ENCODE measurements at regions of chr7 and their contacts with region 1.

Region 1: DNA sequence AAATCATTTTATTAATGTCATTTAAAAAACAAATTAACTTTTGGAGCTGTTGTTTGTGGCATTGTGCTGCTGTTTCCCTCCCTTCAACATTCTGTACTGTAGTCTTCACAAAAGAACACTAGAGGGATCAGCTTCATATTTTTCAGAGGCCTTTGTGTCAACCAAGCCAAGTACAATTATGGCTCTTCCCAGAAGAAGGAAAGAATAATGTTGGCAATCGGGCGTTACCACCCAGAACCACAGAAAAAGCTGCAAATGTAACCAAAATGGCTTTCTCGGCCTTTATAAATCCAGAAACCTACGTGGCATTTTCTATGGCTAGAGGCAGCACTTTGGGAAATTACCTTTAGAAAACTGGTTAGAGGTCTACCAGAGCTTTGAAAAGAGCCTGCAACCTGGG is 98.8 kb upstream of the COL1A2 start:
- DNase-seq: no peak
- H3K4me3 ChIP-seq: peak overlapping the region; percentile 32
- CTCF ChIP-seq: peak; percentile 53

Region 2: GRCh38 chr7:94368371-94368791 is 72.5 kb after region 1 on chr7:
- CTCF ChIA-PET with region 1: interaction called, 18 read pairs
- POLR2A ChIA-PET with region 1: interaction called, 54 read pairs
- DNase-seq: peak; percentile 58
- H3K4me3 ChIP-seq: peak overlapping the region; percentile 41
- CTCF ChIP-seq: no peak

Region 3: DNA sequence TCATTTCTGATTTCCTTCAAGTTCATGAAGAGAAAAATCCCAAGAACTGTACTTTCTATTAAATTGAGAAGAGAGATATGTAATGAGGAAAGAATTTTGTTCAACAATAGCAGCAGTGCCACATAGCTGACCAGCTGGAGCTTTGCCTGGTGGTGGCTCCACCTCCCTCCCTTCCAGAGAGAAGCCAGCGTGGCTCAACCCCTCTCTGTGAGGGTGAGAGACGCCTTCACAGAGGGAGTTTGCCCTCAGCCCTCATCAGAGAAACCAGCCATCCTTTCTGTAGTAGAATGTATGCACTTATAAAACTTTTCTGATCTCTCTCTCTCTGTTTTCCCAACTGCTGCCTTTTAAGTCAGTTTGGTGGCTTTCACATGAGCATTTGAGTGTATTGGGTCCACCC is 78.4 kb after region 1 on chr7:
- CTCF ChIA-PET with region 1: interaction called, 34 read pairs
- POLR2A ChIA-PET with region 1: interaction called, 74 read pairs
- DNase-seq: no peak
- H3K4me3 ChIP-seq: peak overlapping the region; percentile 43
- CTCF ChIP-seq: no peak

Region 4: GRCh38 chr7:94382132-94382531 is 86.3 kb after region 1 on chr7:
- CTCF ChIA-PET with region 1: interaction called, 41 read pairs
- POLR2A ChIA-PET with region 1: interaction called, 5 read pairs
- DNase-seq: no peak
- H3K4me3 ChIP-seq: no peak overlapping the region
- CTCF ChIP-seq: no peak

Region 5: DNA sequence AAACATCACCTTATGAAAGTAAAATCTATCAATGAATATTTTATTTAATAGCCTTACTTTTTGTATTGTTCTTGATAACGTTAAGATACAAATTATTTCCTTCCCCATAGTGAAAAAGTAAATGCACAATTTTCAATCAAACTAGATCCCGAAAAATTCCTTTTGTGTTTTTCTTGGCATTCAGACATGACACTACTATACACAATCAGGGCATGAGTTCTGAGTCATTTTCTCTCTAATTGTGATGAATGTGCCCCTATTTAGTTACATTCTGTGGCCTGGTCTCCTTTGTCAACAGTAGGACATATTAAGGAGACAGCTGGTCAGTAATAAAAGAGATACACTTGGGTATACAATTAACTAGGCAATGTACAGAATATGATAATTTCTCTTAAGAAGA is 118.6 kb after region 1 on chr7:
- CTCF ChIA-PET with region 1: interaction called, 38 read pairs
- POLR2A ChIA-PET with region 1: interaction called, 72 read pairs
- DNase-seq: no peak
- H3K4me3 ChIP-seq: no peak overlapping the region
- CTCF ChIP-seq: no peak

Region 6: DNA sequence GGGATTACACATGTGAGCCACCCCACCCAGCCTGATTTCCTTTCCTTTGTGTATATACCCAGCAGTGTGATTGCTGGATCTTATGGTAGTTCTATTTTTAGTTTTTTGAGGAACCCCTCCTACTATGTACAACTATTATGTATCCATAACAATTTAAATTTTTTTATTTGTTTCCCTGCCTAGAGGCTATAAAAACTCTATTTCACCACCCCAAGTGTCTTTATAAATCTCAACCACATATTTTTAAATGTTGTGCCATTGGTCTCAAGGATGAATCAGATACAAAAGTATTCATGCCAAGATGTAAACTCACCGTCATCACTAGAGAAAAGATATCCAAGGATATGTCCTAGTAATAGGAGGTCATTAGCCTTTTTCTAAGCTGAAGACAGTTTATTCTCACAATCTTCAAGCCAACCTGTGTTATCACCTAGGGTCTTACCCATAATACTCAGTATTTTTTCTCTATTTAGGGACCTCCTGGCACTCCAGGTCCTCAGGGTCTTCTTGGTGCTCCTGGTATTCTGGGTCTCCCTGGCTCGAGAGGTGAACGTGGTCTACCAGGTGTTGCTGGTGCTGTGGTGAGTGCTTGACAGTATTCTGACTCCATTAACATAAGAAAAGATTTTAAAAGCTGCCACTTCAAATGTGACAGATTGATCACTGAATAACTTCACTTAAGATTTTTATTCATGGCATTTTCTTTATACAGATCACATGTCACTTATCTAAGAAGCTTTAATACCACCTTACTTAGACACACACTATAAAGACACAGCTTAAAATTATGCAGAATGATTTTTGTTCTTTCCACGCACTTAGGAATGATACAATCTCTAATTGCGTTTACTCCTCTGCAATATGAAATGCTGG is 128.2 kb after region 1 on chr7:
- CTCF ChIA-PET with region 1: interaction called, 48 read pairs
- POLR2A ChIA-PET with region 1: interaction called, 57 read pairs
- DNase-seq: peak; percentile 47
- H3K4me3 ChIP-seq: no peak overlapping the region
- CTCF ChIP-seq: no peak

Region 7: GRCh38 chr7:94436018-94436604 is 140.3 kb after region 1 on chr7:
- CTCF ChIA-PET with region 1: interaction called, 788 read pairs
- POLR2A ChIA-PET with region 1: interaction called, 46 read pairs
- DNase-seq: no peak
- H3K4me3 ChIP-seq: no peak overlapping the region
- CTCF ChIP-seq: peak; percentile 69

Measured in AG04449 (cell line).